ENCODE measurements at regions of chr11 and their contacts with region 1.

Region 1: GRCh38 chr11:58654079-58654907 is 31.8 kb downstream of the CNTF start:
- DNase-seq: peak; percentile 45 to 67 (median 56)
- H3K4me3 ChIP-seq: no peak overlapping the region
- H3K4me3 Mint-ChIP-seq: no peak overlapping the region
- H3K27ac ChIP-seq: no peak overlapping the region
- H3K27ac Mint-ChIP-seq: no peak overlapping the region
- H3K4me1 ChIP-seq: no peaks in the 10 kb centered on the region
- H3K4me1 Mint-ChIP-seq: peaks cover 4% of the 10 kb centered on the region
- H3K27me3 ChIP-seq: no peaks in the 10 kb centered on the region
- H3K27me3 Mint-ChIP-seq: peaks cover 0 to 2% (median 0%) of the 10 kb centered on the region in 3 donors
- CTCF ChIP-seq: peak; percentile 91

Region 2: DNA sequence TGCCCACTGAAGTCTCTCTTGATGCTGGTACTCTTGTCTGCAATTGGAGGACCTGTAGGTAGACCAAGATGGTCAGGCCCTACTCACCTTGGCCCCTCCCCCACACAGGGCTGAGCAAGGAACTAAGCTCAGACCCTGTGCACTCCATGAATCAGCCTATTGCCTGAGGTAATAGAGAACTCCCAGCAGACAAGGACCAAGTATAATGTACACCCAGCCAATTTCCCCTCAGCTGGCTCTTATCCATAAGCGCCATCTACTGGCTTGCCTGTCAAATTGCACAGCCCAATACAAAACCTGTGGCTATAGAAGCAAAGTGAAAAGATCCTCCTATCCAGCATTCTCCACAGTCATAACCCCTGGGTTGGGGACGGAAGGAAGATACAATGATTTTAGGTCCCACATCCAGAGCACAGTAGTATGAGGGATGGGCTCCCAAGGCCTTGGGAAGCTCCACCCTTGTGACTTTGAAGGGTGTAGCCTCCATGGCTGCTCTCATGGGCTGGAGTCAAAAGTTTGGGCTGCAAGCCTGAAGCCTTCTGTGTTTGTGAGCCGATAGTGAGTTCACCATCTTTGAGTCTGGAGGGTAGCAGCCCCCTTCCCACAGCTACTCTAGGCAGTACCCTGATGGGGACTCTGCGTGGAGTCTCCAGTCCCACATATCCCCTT is 134.2 kb after region 1 on chr11:
- intact Hi-C with region 1: loop called (anchors 2 kb)
- DNase-seq: peak; percentile 30 to 63 (median 59)
- H3K4me3 ChIP-seq: no peak overlapping the region
- H3K4me3 Mint-ChIP-seq: no peak overlapping the region
- H3K27ac ChIP-seq: no peak overlapping the region
- H3K27ac Mint-ChIP-seq: no peak overlapping the region
- H3K4me1 ChIP-seq: no peaks in the 10 kb centered on the region
- H3K4me1 Mint-ChIP-seq: no peaks in the 10 kb centered on the region
- H3K27me3 ChIP-seq: no peaks in the 10 kb centered on the region
- H3K27me3 Mint-ChIP-seq: peaks cover 0 to 3% (median 2%) of the 10 kb centered on the region in 3 donors
- CTCF ChIP-seq: peak; percentile 93

Region 3: GRCh38 chr11:58900479-58901420 is 246.5 kb after region 1 on chr11:
- intact Hi-C with region 1: loop called in 1 of 2 experiments (anchors 10 kb)
- DNase-seq: peak; percentile 29 to 49 (median 49)
- H3K4me3 ChIP-seq: no peak overlapping the region
- H3K4me3 Mint-ChIP-seq: peak overlapping the region in 1 of 2 donors; percentile 47
- H3K27ac ChIP-seq: no peak overlapping the region
- H3K27ac Mint-ChIP-seq: peak overlapping the region in 1 of 7 donors; percentile 52
- H3K4me1 ChIP-seq: peaks cover 20 to 21% of the 10 kb centered on the region in 2 donors
- H3K4me1 Mint-ChIP-seq: peaks cover 30% of the 10 kb centered on the region
- H3K27me3 ChIP-seq: peaks cover 9 to 19% of the 10 kb centered on the region in 2 donors
- H3K27me3 Mint-ChIP-seq: peaks cover 21 to 33% (median 28%) of the 10 kb centered on the region in 3 donors
- CTCF ChIP-seq: peak; percentile 82

Region 4: GRCh38 chr11:59062602-59063529 is 408.6 kb after region 1 on chr11:
- intact Hi-C with region 1: loop called in 1 of 2 experiments (anchors 10 kb)
- DNase-seq: no peak
- H3K4me3 ChIP-seq: no peak overlapping the region
- H3K4me3 Mint-ChIP-seq: peak overlapping the region in 1 of 2 donors; percentile 66
- H3K27ac ChIP-seq: no peak overlapping the region
- H3K27ac Mint-ChIP-seq: no peak overlapping the region
- H3K4me1 ChIP-seq: peaks cover 0 to 2% of the 10 kb centered on the region in 2 donors
- H3K4me1 Mint-ChIP-seq: peaks cover 7% of the 10 kb centered on the region
- H3K27me3 ChIP-seq: peaks cover 0 to 21% of the 10 kb centered on the region in 2 donors
- H3K27me3 Mint-ChIP-seq: peaks cover 27 to 45% (median 41%) of the 10 kb centered on the region in 3 donors
- CTCF ChIP-seq: no peak